Caco-2 (cell line): ENCODE measurements at regions of chr11 and their contacts with region 1.

Region 1: GRCh38 chr11:115244758-115245157 is 259.5 kb downstream of the CADM1 start:
- DNase-seq: no peak
- H3K4me3 ChIP-seq: no peak overlapping the region
- H3K4me3 Mint-ChIP-seq: no peak overlapping the region
- H3K27ac Mint-ChIP-seq: peak overlapping the region; percentile 44
- H3K4me1 ChIP-seq: peaks cover 58% of the 10 kb centered on the region
- H3K4me1 Mint-ChIP-seq: peaks cover 54% of the 10 kb centered on the region
- H3K27me3 ChIP-seq: no peaks in the 10 kb centered on the region
- H3K27me3 Mint-ChIP-seq: no peaks in the 10 kb centered on the region
- CTCF ChIP-seq: no peak

Region 2: GRCh38 chr11:115215694-115216617 is 28.8 kb before region 1 on chr11:
- CTCF ChIA-PET with region 1: no interaction called
- POLR2A ChIA-PET with region 1: no interaction called
- intact Hi-C with region 1: loop called (anchors 2 kb)
- DNase-seq: peak; percentile 51 to 52
- H3K4me3 ChIP-seq: no peak overlapping the region
- H3K4me3 Mint-ChIP-seq: no peak overlapping the region
- H3K27ac Mint-ChIP-seq: peak overlapping the region; percentile 55
- H3K4me1 ChIP-seq: no peaks in the 10 kb centered on the region
- H3K4me1 Mint-ChIP-seq: no peaks in the 10 kb centered on the region
- H3K27me3 ChIP-seq: no peaks in the 10 kb centered on the region
- H3K27me3 Mint-ChIP-seq: no peaks in the 10 kb centered on the region
- CTCF ChIP-seq: peak; percentile 50 to 85

Region 3: GRCh38 chr11:115226556-115226955 is 18.2 kb before region 1 on chr11:
- CTCF ChIA-PET with region 1: no interaction called
- POLR2A ChIA-PET with region 1: interaction called, 4 read pairs
- intact Hi-C with region 1: loop called (anchors 1 kb)
- DNase-seq: peak; percentile 80
- H3K4me3 ChIP-seq: no peak overlapping the region
- H3K4me3 Mint-ChIP-seq: peak overlapping the region; percentile 40
- H3K27ac Mint-ChIP-seq: peak overlapping the region; percentile 54
- H3K4me1 ChIP-seq: peaks cover 33% of the 10 kb centered on the region
- H3K4me1 Mint-ChIP-seq: peaks cover 27% of the 10 kb centered on the region
- H3K27me3 ChIP-seq: no peaks in the 10 kb centered on the region
- H3K27me3 Mint-ChIP-seq: no peaks in the 10 kb centered on the region
- CTCF ChIP-seq: peak in 1 of 2 experiments; percentile 2

Region 4: GRCh38 chr11:115279813-115280761 is 35.3 kb after region 1 on chr11:
- CTCF ChIA-PET with region 1: interaction called, 3 read pairs
- POLR2A ChIA-PET with region 1: interaction called, 6 read pairs
- intact Hi-C with region 1: loop called (anchors 1 kb)
- DNase-seq: peak; percentile 46 to 76
- H3K4me3 ChIP-seq: peak overlapping the region; percentile 19
- H3K4me3 Mint-ChIP-seq: peak overlapping the region; percentile 74
- H3K27ac Mint-ChIP-seq: peak overlapping the region; percentile 88
- H3K4me1 ChIP-seq: peaks cover 43% of the 10 kb centered on the region
- H3K4me1 Mint-ChIP-seq: peaks cover 42% of the 10 kb centered on the region
- H3K27me3 ChIP-seq: no peaks in the 10 kb centered on the region
- H3K27me3 Mint-ChIP-seq: no peaks in the 10 kb centered on the region
- CTCF ChIP-seq: no peak